PC-9 (cell line): ENCODE measurements at regions of chr22 and their contacts with region 1.

Region 1: GRCh38 chr22:21791635-21792625 is 56.3 kb upstream of the YPEL1 start:
- DNase-seq: no peak
- H3K4me3 ChIP-seq: no peak overlapping the region
- H3K27ac ChIP-seq: no peak overlapping the region
- H3K4me1 ChIP-seq: no peaks in the 10 kb centered on the region
- H3K27me3 ChIP-seq: no peaks in the 10 kb centered on the region
- CTCF ChIP-seq: no peak

Region 2: DNA sequence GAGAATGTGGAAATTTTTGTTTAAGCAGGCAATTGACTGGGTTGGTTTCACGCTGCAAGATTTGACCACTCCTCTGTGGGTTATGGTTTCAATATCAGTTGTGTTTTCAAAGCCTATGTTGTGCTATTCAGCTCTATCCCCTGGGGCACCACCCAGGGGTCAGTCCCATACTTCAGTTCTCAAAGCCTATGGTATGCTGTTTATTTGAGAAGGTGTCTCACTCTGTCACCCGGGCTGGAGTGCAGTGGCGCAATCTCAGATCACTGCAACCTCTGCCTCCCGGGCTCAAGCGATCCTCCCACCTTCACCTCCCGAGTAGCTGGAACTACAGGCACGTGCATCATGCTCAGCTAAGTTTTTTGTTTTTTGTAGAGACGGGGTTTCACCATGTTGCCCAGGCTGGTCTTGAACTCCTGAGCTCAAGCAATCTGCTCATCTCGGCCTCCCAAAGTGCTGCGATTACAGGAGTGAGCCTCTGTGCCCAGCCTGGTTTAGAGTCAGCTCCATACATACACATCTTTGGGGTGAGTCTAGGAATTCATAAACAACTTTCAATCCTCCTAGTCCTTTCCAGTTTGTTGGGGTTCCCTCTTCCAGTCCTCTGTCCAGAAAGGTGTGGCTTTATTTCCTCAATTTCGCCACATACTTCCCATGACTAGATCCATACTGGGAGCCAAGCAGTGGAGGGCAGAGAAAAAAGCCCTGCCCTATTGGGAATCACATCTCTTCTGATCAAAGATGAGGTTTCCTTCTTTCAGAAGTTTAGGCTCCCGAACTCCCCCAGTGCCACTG is 110.6 kb after region 1 on chr22:
- CTCF ChIA-PET with region 1: no interaction called
- POLR2A ChIA-PET with region 1: interaction called, 13 read pairs
- intact Hi-C with region 1: no loop called
- DNase-seq: no peak
- H3K4me3 ChIP-seq: no peak overlapping the region
- H3K27ac ChIP-seq: no peak overlapping the region
- H3K4me1 ChIP-seq: no peaks in the 10 kb centered on the region
- H3K27me3 ChIP-seq: no peaks in the 10 kb centered on the region
- CTCF ChIP-seq: no peak